GM12878 (cell line): ENCODE measurements at regions of chr17 and their contacts with region 1.

Region 1: GRCh38 chr17:77145612-77146245 is 5.0 kb downstream of the SEC14L1 start:
- DNase-seq: peak; percentile 71
- ATAC-seq: peak; percentile 63
- H3K4me3 ChIP-seq: peak overlapping the region; percentile 69
- H3K27ac ChIP-seq: peak overlapping the region; percentile 97
- H3K4me1 ChIP-seq: peaks cover 43% of the 10 kb centered on the region
- H3K27me3 ChIP-seq: no peaks in the 10 kb centered on the region
- CTCF ChIP-seq: peak in 2 of 3 experiments; percentile 8 to 22; a peak in 1 of 6 replicates
- EP300 ChIP-seq: peak in 1 of 2 experiments; percentile 56; a peak in 2 of 4 replicates
- POLR2A ChIP-seq: 0 out of 2 replicates have a peak, but pooled peaks have one; percentile 32
- RAD21 ChIP-seq: no peak

Region 2: DNA sequence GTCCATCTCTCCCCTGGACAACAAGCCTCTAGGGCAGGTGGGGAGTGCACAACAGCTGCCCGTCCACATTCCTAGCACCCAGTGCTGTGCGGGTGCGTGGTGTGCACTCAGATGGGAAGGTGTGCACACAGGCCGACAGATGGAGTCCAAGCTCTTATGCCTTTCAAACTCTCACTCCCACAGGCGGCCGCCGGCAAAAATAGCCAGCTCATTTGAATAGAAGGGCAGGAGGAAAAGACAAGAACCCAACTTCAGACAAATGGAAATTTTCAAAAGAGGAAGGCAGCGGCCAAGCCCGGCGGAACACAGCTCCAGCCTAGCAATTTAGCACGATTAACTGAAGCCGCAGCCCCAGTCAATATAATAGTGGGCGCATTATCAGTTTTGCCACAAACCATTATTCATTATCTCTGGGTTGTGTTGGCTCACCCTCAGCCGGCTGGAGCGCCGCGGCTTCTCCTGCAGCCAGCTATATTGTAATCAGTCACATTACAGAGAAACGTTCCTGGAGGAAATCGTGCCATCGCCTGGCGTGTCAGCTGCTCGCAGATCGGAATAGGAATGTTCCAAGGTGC is 108.8 kb before region 1 on chr17:
- CTCF ChIA-PET with region 1: no interaction called
- POLR2A ChIA-PET with region 1: no interaction called
- RAD21 ChIA-PET with region 1: no interaction called
- SMC1A ChIA-PET with region 1: no interaction called
- in situ Hi-C with region 1: no loop called
- intact Hi-C with region 1: no loop called
- DNase-seq: no peak
- ATAC-seq: 0 out of 3 replicates have a peak, but pooled peaks have one; percentile 25
- H3K4me3 ChIP-seq: no peak overlapping the region
- H3K27ac ChIP-seq: no peak overlapping the region
- H3K4me1 ChIP-seq: no peaks in the 10 kb centered on the region
- H3K27me3 ChIP-seq: peaks cover 4 to 6% of the 10 kb centered on the region in 2 experiments; a peak in 3 of 4 replicates
- CTCF ChIP-seq: no peak
- EP300 ChIP-seq: no peak
- POLR2A ChIP-seq: no peak
- RAD21 ChIP-seq: no peak

Region 3: GRCh38 chr17:77164483-77165091 is 18.9 kb after region 1 on chr17:
- CTCF ChIA-PET with region 1: interaction called, 4 read pairs
- POLR2A ChIA-PET with region 1: interaction called, 5 read pairs
- RAD21 ChIA-PET with region 1: interaction called, 7 read pairs
- SMC1A ChIA-PET with region 1: interaction called, 11 read pairs
- in situ Hi-C with region 1: no loop called
- intact Hi-C with region 1: no loop called
- DNase-seq: no peak
- ATAC-seq: no peak
- H3K4me3 ChIP-seq: no peak overlapping the region; the same call in 1 of the 2 replicates
- H3K27ac ChIP-seq: peak overlapping the region; percentile 28; the same call in 1 of the 2 replicates
- H3K4me1 ChIP-seq: peaks cover 14% of the 10 kb centered on the region
- H3K27me3 ChIP-seq: no peaks in the 10 kb centered on the region
- CTCF ChIP-seq: no peak
- EP300 ChIP-seq: no peak
- POLR2A ChIP-seq: no peak
- RAD21 ChIP-seq: no peak